ENCODE measurements at regions of chr12 and their contacts with region 1.

Region 1: DNA sequence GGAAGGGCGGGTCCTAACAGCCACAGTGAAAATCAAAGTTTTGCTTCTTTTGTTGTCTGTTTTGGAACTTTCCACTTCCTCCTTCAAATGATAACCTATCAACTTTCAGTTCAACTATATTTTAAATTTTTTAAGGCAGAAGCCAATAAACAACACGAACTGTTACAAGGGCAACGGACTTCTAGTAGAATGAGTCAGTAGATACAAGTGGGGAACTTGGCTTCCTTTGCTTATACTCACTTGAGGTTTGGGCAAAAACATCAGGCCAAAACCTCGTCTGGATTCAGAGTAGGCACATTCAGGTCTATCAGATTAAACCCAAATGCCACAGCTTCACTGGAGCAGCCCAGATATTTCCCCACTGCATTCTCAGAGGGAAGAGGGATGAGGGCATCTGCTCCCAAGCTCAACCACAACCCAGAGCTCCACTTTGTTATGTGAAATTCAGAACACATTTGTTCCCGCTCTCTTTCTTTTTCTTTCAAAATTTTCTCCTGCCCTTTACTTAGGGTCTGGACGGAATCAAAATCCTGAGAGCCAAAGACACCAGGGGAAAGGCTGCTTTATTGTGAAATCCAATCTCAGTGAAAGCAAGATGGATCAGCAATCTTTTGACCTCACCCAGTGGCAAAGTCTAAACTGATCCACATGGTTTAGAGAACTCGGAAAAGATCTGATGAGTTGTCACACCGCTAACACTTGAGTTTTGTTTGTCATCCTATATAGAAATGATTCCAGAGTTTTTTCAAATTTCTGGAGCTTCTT is 152.5 kb upstream of the BTG1 start:
- ATAC-seq: peak in 2 of 8 experiments; percentile 25 to 45
- H3K4me3 ChIP-seq: no peak overlapping the region
- H3K27ac ChIP-seq: no peak overlapping the region
- H3K4me1 ChIP-seq: no peaks in the 10 kb centered on the region

Region 2: GRCh38 chr12:92396647-92397252 is 98.6 kb after region 1 on chr12:
- in situ Hi-C with region 1: loop called in 1 of 9 experiments (anchors 25 kb)
- ATAC-seq: peak in 7 of 8 experiments; percentile 77 to 99 (median 91)
- H3K4me3 ChIP-seq: no peak overlapping the region
- H3K27ac ChIP-seq: no peak overlapping the region
- H3K4me1 ChIP-seq: no peaks in the 10 kb centered on the region